ENCODE measurements at regions of chr3 and their contacts with region 1.

Region 1: GRCh38 chr3:129745253-129745652 is 138.8 kb upstream of the PLXND1 start:
- DNase-seq: no peak
- H3K4me3 Mint-ChIP-seq: no peak overlapping the region
- H3K27ac Mint-ChIP-seq: no peak overlapping the region
- H3K4me1 Mint-ChIP-seq: peaks cover 25% of the 10 kb centered on the region
- H3K27me3 Mint-ChIP-seq: no peaks in the 10 kb centered on the region

Region 2: DNA sequence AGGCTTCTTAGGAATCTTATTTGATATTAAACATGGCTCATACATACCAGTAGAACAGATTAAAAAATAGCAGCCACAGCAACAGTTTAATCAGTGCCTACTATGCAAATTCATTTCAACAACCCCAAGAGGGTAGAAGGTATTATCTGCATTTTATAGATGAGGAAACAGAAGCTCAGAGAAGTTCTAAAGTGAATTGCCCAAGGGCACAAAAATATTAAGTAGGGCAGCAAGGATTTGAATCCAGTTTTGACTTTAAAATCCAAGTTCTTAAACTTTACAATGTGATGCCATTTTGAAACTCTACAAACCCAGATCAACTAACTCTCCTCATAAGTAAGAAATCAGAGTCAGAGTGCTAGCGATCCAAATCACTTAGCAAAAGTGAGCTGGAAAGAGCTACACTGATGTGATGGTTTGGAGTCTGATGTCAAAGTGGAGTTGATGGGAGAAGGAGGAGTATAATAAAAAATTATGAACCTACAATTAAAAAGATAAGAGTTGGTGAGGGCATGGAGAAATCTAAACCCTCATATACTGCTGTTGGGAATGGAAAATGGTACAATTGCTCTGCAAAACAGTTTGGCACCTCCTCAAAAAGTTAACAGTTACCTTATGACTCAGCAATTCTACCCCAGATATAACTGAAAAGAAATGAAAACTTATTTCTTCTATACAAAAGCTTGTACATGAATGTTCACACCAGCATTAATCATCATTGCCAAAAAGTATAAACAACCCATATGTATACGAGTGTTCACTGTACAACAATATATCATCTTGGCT is 87.8 kb before region 1 on chr3:
- CTCF ChIA-PET with region 1: no interaction called
- intact Hi-C with region 1: loop called (anchors 5 kb)
- DNase-seq: no peak
- H3K4me3 Mint-ChIP-seq: no peak overlapping the region
- H3K27ac Mint-ChIP-seq: no peak overlapping the region
- H3K4me1 Mint-ChIP-seq: peaks cover 15% of the 10 kb centered on the region
- H3K27me3 Mint-ChIP-seq: no peaks in the 10 kb centered on the region

Region 3: GRCh38 chr3:129702934-129703712 is 42.1 kb before region 1 on chr3:
- CTCF ChIA-PET with region 1: no interaction called
- intact Hi-C with region 1: loop called (anchors 2 kb)
- DNase-seq: no peak
- H3K4me3 Mint-ChIP-seq: no peak overlapping the region
- H3K27ac Mint-ChIP-seq: no peak overlapping the region
- H3K4me1 Mint-ChIP-seq: peaks cover 14% of the 10 kb centered on the region
- H3K27me3 Mint-ChIP-seq: no peaks in the 10 kb centered on the region